ENCODE measurements at regions of chr5 and their contacts with region 1.

Region 1: DNA sequence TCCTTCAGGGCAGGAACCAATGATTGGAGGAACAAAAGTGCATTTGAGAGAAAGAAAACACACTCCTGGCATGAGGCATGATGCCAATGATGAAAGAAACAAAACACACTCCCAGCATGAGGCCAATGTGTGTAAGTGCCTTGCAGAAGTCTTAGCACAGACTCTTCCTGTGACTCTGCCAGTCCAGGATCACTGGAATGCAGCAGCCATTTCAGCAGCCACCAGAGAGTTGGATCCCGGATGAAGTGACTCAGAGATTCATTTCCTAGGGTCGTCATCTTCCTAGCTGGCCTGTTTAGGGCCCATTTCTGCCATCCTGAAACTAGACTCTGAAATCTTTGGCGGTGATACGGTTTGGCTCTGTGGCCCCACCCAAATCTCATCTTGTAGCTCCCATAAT is 212.5 kb downstream of the CFAP90 start:
- DNase-seq: no peak
- H3K4me3 ChIP-seq: no peak overlapping the region
- H3K27ac ChIP-seq: no peak overlapping the region
- H3K4me1 ChIP-seq: no peaks in the 10 kb centered on the region
- H3K27me3 ChIP-seq: no peaks in the 10 kb centered on the region
- CTCF ChIP-seq: no peak
- POLR2A ChIP-seq: no peak

Region 2: DNA sequence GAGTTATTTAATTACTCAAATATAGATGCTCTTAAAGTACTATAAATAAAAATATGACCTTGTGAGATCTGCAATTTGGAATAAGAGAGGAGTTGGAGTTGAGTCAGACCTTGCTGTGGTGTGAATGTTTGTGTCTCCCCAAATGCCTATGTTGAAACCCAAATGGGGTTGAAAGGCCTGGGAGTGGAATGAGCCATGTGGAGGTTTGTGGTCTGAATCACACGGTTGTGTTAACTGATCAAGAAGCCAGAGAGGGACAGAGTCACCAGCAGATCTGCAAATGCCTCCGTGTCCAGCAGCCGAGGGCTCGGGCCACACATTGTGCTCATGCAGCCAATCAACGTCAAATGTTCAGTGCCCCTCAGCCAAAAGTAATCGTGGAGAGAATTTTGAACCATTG is 1811.5 kb before region 1 on chr5:
- intact Hi-C with region 1: loop called (anchors 5 kb)
- DNase-seq: no peak
- H3K4me3 ChIP-seq: no peak overlapping the region
- H3K27ac ChIP-seq: no peak overlapping the region
- H3K4me1 ChIP-seq: no peaks in the 10 kb centered on the region
- H3K27me3 ChIP-seq: peaks cover 0 to 4% of the 10 kb centered on the region in 2 donors
- CTCF ChIP-seq: no peak
- POLR2A ChIP-seq: no peak

Region 3: GRCh38 chr5:6188344-6188743 is 1450.1 kb before region 1 on chr5:
- intact Hi-C with region 1: loop called (anchors 10 kb)
- DNase-seq: no peak
- H3K4me3 ChIP-seq: no peak overlapping the region
- H3K27ac ChIP-seq: no peak overlapping the region
- H3K4me1 ChIP-seq: no peaks in the 10 kb centered on the region
- H3K27me3 ChIP-seq: no peaks in the 10 kb centered on the region
- CTCF ChIP-seq: no peak
- POLR2A ChIP-seq: no peak

Region 4: GRCh38 chr5:7659420-7659819 is 21.0 kb after region 1 on chr5:
- intact Hi-C with region 1: loop called (anchors 1 kb)
- DNase-seq: no peak
- H3K4me3 ChIP-seq: no peak overlapping the region
- H3K27ac ChIP-seq: no peak overlapping the region
- H3K4me1 ChIP-seq: no peaks in the 10 kb centered on the region
- H3K27me3 ChIP-seq: no peaks in the 10 kb centered on the region
- CTCF ChIP-seq: no peak
- POLR2A ChIP-seq: no peak